ENCODE measurements at regions of chrX and their contacts with region 1.

Region 1: GRCh38 chrX:153032397-153033118 is 23.7 kb upstream of the PNMA3 start:
- DNase-seq: peak; percentile 92

Region 2: DNA sequence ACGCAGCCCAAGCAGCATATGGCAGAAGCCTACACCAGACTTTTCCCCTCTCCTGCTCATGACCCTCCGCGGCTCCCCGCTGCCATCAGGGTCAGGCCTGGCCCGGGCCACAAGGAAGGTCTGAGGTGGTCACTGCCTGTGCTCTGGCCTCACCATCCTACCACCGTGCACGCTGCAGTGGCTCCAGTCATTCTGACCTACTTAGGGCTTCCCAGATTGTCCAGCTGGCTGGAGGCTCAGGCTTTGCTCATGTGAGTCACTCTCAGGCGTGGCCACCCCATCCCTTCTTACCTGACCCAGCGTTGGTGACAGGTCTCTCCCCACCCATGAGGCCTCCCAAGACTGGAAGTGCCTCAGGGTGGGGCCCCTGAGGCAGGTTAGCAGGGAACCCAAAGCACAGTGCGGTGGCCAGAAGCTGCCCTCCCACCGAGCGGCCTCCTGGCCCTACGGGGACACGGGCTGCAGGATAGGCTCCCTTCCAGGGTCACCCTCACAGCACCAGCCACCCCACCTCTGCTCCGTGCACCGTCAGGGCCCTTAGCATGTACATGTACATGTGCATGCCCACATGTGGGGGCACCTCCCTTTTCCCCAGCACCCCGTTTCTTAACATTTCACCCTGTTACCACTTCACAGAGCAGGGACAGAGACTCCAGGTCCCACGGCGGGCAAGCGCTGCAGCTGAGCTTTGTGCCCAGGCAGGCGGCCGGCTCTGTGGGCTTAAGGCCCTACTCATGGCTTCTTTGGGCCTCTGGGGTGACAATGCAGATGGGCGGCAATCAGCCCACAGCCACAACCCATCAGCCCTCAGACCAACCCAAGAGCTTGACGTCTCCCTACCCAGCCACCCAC is 411.1 kb after region 1 on chrX:
- intact Hi-C with region 1: loop called in 1 of 2 experiments (anchors 10 kb)
- DNase-seq: peak; percentile 79